Right ventricle myocardium inferior (tissue), 1 donor: ENCODE measurements at regions of chrX and their contacts with region 1.

Region 1: DNA sequence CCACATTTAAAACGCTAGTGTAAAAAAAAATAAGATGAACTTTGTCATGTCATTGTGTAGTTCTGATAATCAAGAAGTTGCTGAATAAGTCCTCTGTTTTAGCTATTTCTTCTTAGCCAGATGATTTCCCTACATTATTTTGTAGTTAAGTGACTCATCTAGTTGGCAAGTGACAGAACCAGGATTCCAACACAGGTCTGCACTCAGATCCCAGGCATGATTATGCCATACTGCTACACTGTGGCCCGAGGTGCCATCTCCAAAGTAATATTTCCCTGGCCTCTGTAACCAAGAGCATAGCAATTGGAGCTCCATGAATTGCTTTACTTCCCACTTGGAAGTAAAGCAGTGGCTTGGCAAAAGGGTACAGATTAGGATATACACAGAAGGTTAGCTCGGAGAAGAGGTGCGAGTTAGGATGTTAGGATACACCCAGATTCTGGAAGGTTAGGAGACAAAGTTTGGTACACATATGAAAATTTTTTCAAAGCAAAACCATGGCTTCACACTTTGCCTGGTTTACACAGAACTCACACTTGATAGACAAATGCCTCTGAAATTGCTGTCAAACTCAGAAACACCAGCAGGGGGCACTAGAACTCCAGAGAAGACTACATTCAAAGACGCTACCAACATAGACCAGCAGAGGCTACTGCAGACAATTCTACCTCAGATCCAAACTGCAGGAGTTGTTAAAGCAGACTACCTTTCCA is 41.4 kb downstream of the SRPX2 start:
- DNase-seq: no peak
- ATAC-seq: peak; percentile 64

Region 2: GRCh38 chrX:99901091-99901490 is 784.3 kb before region 1 on chrX:
- intact Hi-C with region 1: no loop called
- DNase-seq: no peak
- ATAC-seq: no peak

Region 3: DNA sequence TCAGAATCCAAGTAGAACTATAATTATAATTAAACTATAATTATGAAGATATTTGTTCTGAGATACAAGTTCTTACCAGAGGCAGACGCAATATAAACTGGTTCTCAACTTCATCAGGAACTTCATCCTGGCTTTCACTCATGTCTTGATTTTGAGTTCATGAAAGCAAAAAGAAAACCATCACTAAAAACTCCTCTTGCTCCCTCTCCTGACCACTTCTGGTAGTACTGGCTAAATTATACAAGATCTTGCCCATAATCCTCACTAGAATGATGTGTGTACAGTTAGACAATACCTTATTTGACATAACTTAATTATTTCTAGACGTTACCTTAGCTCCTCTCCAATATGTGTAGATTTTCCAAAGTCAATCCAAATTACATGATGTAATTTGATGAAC is 602.0 kb after region 1 on chrX:
- intact Hi-C with region 1: loop called (anchors 5 kb)
- DNase-seq: no peak
- ATAC-seq: no peak